HEK293 (cell line): ENCODE measurements at regions of chr6 and their contacts with region 1.

Region 1: DNA sequence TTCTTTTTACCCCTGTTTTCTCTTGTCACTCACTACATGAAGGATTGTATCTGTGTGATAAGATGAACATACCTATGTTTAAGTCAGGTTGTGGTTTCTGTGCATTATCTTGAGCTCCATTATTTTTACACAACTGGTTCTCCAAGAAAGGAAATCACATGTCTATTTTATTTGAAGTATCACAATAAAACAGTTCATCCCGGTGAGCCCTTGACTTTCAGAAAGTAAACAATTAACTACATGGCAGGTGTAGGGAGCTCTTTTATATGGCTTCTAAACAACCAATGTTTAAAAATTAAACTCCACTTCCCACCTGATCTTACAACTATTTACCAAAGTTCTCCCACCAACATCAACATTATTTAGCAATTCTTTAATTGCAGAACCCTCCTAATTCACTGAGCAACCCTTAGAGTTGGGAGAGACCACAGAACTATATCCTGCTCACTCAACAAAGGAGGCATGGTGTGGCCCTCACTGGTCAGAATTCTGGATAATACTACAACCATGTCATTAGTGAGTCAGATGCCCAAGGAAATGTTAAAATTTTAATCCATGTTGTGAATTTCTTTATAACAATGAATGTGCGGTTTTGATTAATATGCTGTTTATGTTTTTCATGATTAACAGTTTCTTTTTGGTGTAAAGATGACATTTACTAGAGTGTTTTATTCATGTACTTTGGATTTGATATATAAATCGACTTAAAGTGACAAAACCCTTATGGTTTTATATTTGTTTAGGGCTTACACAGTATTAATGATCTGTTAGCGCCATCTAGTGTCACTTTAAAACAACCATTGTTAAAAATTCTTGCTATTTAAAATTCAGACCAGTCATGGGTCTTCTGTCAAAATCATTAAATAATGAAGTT is 50.0 kb upstream of the SCGN start:
- H3K4me3 ChIP-seq: no peak overlapping the region
- H3K27ac ChIP-seq: no peak overlapping the region
- H3K4me1 ChIP-seq: no peaks in the 10 kb centered on the region
- CTCF ChIP-seq: peak; percentile 28; the same call in 1 of the 2 replicates

Region 2: GRCh38 chr6:25089442-25089841 is 512.6 kb before region 1 on chr6:
- CTCF ChIA-PET with region 1: no interaction called
- POLR2A ChIA-PET with region 1: no interaction called
- H3K4me3 ChIP-seq: no peak overlapping the region
- H3K27ac ChIP-seq: no peak overlapping the region
- H3K4me1 ChIP-seq: no peaks in the 10 kb centered on the region
- CTCF ChIP-seq: no peak

Region 3: DNA sequence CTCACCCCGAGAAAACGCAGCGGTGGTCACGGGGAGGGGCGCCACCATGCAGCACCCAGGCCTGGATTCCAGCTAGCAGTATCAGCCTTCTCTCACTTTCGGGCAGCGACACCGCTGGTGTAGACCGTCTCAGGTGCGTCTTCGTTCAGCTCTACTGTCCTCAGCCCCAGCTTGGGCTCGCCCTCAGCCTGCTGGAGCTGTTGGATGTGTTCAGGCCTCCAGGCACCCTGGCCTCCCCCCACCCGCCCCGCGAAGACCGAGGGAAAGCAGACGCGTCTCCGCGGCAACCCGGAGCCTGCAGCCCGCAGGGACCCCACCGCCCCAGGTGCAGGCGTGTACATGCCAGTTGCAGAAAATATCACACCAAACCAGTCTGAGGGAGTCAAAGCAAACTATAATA is 383.7 kb before region 1 on chr6:
- CTCF ChIA-PET with region 1: interaction called, 28 read pairs
- POLR2A ChIA-PET with region 1: no interaction called
- H3K4me3 ChIP-seq: no peak overlapping the region
- H3K27ac ChIP-seq: no peak overlapping the region
- H3K4me1 ChIP-seq: no peaks in the 10 kb centered on the region
- CTCF ChIP-seq: no peak

Region 4: DNA sequence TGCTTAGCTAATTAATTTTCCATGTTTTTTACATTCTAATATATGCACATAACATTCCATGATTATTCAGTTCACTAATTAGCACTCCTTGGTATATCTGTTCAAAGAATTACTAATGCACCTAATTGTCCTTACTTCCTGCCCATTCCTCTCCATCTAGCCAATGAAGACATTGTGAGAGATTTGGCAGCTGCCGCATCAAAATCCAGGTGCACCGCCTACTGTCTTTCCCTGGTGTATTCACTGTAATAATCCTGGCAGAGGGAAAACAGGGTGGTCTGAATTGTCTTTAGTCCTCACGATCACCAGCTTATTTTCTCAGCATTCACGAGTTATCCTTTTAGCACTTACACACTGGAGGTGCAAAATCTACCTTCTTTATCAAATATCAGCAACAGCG is 11.1 kb before region 1 on chr6:
- CTCF ChIA-PET with region 1: interaction called, 27 read pairs
- POLR2A ChIA-PET with region 1: no interaction called
- H3K4me3 ChIP-seq: no peak overlapping the region
- H3K27ac ChIP-seq: no peak overlapping the region
- H3K4me1 ChIP-seq: no peaks in the 10 kb centered on the region
- CTCF ChIP-seq: no peak

Region 5: GRCh38 chr6:25958700-25959162 is 356.7 kb after region 1 on chr6:
- CTCF ChIA-PET with region 1: no interaction called
- POLR2A ChIA-PET with region 1: no interaction called
- H3K4me3 ChIP-seq: no peak overlapping the region
- H3K27ac ChIP-seq: no peak overlapping the region
- H3K4me1 ChIP-seq: peaks cover 10% of the 10 kb centered on the region; the same call in 1 of the 2 replicates
- CTCF ChIP-seq: no peak